ENCODE measurements at regions of chr1 and their contacts with region 1.

Region 1: GRCh38 chr1:26999440-26999987 is 6.0 kb downstream of the TRNP1 start:
- DNase-seq: no peak
- H3K4me3 Mint-ChIP-seq: no peak overlapping the region
- H3K27ac Mint-ChIP-seq: no peak overlapping the region
- H3K4me1 Mint-ChIP-seq: peaks cover 8% of the 10 kb centered on the region
- H3K27me3 Mint-ChIP-seq: peaks cover 35% of the 10 kb centered on the region

Region 2: GRCh38 chr1:26932531-26932930 is 67.0 kb before region 1 on chr1:
- intact Hi-C with region 1: no loop called
- DNase-seq: no peak
- H3K4me3 Mint-ChIP-seq: no peak overlapping the region
- H3K27ac Mint-ChIP-seq: no peak overlapping the region
- H3K4me1 Mint-ChIP-seq: peaks cover 2% of the 10 kb centered on the region
- H3K27me3 Mint-ChIP-seq: no peaks in the 10 kb centered on the region

Region 3: GRCh38 chr1:27097484-27097917 is 98.0 kb after region 1 on chr1:
- intact Hi-C with region 1: loop called (anchors 1 kb)
- DNase-seq: peak; percentile 94
- H3K4me3 Mint-ChIP-seq: no peak overlapping the region
- H3K27ac Mint-ChIP-seq: no peak overlapping the region
- H3K4me1 Mint-ChIP-seq: peaks cover 14% of the 10 kb centered on the region
- H3K27me3 Mint-ChIP-seq: no peaks in the 10 kb centered on the region

Region 4: DNA sequence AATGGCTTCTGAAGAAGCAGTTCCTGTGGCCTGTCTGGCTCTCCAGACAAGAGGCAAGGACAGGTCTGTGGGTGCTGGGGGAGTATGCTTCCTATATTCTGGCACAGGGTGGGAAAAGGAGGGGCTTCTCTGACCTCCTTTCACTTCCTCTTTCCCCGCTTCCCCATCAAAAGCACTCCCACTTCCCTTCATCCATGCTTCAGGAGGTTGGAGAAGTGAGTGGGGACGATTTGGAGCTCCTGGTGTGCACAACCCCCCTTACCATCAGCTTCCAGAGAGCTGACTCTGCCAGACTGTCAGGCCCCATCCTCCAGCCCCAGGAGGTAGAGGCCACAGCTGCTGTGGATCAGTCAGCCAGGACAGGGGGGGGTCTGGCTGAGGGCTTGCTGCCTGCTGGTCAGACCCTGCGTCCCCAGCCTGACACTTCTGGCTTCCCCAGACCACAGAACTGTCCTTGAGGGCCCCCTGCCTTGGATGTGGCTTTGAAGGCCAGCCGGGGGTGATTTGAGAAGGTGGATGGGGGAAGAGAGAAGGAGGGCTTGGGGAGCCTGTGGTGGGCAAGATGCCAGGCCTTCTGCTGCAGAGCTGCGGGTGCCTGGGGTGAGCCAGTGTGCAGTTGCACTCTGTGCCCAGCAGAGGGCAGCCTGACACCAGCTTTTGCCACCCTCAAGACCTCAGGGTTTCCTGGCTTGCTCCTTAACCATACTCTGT is 301.0 kb after region 1 on chr1:
- intact Hi-C with region 1: no loop called
- DNase-seq: peak; percentile 92
- H3K4me3 Mint-ChIP-seq: no peak overlapping the region
- H3K27ac Mint-ChIP-seq: no peak overlapping the region
- H3K4me1 Mint-ChIP-seq: no peaks in the 10 kb centered on the region
- H3K27me3 Mint-ChIP-seq: no peaks in the 10 kb centered on the region